Dorsolateral prefrontal cortex (tissue), 120 donors: ENCODE measurements at regions of chr2 and their contacts with region 1.

Region 1: GRCh38 chr2:217905395-217905794 is 97.4 kb downstream of the TNS1 start:
- DNase-seq: peak in 9 of 10 donors; percentile 48 to 76 (median 60)
- H3K4me3 ChIP-seq: peak overlapping the region in 6 of 59 donors; percentile 1 to 31 (median 6)
- H3K27ac ChIP-seq: peak overlapping the region; percentile 41 to 95 (median 88)
- H3K27me3 ChIP-seq: no peaks in the 10 kb centered on the region
- CTCF ChIP-seq: no peak

Region 2: DNA sequence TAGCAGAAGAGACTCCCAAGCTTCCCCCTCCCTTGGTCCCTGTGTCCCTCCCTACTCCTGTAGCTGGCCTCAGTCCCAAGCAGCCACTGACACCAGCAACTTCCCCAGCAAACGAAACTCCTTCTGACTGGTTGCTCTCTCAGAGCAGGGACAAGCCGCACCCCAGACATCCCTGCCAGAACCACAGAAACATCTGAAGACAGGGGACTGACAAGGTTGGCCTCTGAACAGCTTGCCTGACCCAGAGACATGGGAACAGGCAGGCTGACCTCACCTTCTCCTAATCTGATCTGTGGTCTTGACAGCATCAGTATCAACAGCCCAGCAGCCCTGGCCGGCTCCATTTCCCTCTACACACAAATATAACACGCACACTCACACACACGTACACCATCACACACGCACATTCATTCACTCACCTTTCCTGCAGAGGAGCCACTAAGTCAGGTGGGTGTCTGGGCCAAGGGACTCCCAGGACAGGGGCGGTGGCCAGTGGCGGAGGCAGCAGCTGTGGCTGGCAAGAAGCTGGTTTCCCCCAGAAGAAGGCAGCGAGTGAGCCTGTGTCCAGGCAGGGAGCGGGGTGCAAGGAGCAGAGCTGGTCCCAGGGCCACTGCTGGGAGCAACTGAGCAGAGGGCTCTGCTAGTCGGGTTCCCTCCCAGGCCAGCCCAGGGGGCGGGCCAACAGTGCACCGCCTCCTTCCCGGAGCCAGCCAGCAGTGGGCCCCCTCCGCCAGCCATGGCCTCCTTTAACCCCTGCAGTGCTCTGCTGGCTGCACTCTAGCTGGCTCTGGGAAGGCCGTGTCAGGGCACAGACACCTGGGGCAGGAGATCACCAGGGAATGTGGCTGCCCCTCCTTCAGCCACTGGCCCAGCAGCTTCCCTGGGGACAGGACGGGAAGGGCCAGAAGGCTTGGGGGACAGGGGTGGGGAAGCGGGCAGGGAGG is 38.3 kb after region 1 on chr2:
- intact Hi-C with region 1: loop called in 1 of 2 experiments (anchors 5 kb)
- DNase-seq: peak; percentile 23 to 88 (median 78)
- H3K4me3 ChIP-seq: peak overlapping the region; percentile 45 to 88 (median 68)
- H3K27ac ChIP-seq: peak overlapping the region in 57 of 59 donors; percentile 10 to 91 (median 80)
- H3K27me3 ChIP-seq: no peaks in the 10 kb centered on the region
- CTCF ChIP-seq: peak in 52 of 56 donors; percentile 16 to 76 (median 52)